ENCODE measurements at regions of chr18 and their contacts with region 1.

Region 1: DNA sequence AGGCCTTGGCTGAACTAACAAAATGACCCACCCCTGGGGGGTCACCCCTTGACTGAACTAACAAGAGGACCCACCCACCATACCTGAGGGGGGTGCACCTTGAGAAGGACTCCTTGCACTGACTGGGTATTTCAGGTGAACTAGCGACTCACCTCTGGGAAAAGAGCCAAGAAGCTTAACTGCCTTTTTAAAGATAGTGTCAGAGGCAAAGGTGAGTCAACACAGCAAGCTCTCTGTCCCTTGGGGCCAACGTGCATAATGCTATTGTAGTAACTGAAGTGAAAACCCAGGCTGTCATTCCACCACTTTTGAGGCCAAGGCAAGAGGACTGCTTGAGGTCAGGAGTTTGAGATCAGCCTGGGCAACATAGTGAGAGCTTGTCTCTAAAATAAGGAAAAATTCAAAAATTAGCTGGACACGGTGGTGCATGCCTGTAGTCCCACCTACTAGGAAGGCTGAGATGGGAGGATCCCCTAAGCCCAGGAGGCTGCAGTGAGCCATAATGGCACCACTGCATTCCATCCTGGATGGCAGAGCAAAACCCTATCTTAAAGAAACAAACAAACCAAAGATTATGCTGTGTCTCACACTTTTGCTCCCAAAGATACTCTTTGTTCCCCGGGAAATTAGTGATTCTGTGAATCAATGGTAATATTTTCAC is 36.4 kb upstream of the ZCCHC2 start:
- DNase-seq: no peak
- ATAC-seq: no peak
- H3K4me3 ChIP-seq: no peak overlapping the region
- H3K4me3 Mint-ChIP-seq: no peak overlapping the region
- H3K27ac ChIP-seq: no peak overlapping the region
- H3K27ac Mint-ChIP-seq: no peak overlapping the region
- H3K4me1 ChIP-seq: no peaks in the 10 kb centered on the region
- H3K4me1 Mint-ChIP-seq: no peaks in the 10 kb centered on the region
- H3K27me3 ChIP-seq: peaks cover 0 to 3% of the 10 kb centered on the region in 2 experiments
- H3K27me3 Mint-ChIP-seq: peaks cover 33% of the 10 kb centered on the region
- CTCF ChIP-seq: no peak

Region 2: DNA sequence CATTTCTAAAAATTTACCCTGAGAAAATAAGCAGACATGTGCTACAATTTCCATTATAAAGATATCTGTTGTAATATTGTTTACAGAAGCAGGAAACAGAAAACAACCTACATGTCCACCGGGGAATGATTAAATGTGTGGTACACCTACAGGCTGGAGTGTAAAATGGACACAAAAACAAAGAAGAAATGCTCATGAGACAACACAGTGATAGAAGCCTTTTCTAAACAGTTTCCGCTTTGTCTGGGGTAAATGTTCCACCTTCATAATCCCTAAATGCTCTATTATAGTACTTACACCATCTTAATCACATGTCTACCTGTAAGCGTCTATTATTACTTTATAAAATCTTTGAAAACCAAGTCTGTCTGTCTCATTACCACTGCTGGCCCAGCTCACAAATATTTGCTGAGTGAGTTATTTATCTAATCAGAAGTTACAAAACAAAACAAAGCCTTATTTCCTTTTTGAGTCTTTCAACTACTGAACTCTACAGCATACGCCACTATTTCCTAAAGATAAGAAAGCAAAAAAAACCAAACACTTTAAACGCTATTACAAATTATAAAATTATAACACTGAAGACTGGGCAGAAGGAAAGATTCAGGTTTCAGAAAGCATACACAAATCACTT is 394.8 kb before region 1 on chr18:
- CTCF ChIA-PET with region 1: no interaction called
- POLR2A ChIA-PET with region 1: no interaction called
- intact Hi-C with region 1: no loop called
- DNase-seq: no peak
- ATAC-seq: no peak
- H3K4me3 ChIP-seq: no peak overlapping the region
- H3K4me3 Mint-ChIP-seq: no peak overlapping the region
- H3K27ac ChIP-seq: no peak overlapping the region
- H3K27ac Mint-ChIP-seq: no peak overlapping the region
- H3K4me1 ChIP-seq: peaks cover 17% of the 10 kb centered on the region
- H3K4me1 Mint-ChIP-seq: peaks cover 27% of the 10 kb centered on the region
- H3K27me3 ChIP-seq: no peaks in the 10 kb centered on the region
- H3K27me3 Mint-ChIP-seq: no peaks in the 10 kb centered on the region
- CTCF ChIP-seq: no peak

Region 3: DNA sequence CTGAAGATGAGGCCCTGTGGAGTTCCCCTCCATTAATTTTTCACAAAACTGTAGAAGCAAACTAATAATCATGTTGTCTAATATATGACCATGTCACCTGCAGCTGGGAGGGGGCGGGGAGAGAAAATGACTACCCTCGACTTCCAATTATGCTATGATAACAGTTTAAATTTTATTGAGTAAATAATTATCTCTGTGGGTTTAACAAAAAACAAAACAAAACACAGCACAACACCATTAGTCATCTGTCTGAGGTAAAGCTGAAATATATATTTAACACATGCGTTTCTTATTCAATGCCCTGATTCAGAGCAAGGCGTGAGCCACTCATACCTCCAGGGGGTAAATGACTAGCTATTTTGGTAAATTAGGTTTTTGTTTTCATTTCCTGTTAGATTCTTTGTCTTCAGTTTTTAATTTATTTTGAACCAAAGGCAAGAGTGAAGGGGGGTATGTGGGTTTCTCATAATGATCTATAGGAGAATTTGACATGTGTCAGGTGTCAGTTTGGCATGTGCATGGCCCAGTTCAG is 41.0 kb before region 1 on chr18:
- CTCF ChIA-PET with region 1: no interaction called
- POLR2A ChIA-PET with region 1: interaction called, 4 read pairs
- intact Hi-C with region 1: loop called in 1 of 2 experiments (anchors 1 kb)
- DNase-seq: no peak
- ATAC-seq: no peak
- H3K4me3 ChIP-seq: no peak overlapping the region
- H3K4me3 Mint-ChIP-seq: no peak overlapping the region
- H3K27ac ChIP-seq: no peak overlapping the region
- H3K27ac Mint-ChIP-seq: no peak overlapping the region
- H3K4me1 ChIP-seq: no peaks in the 10 kb centered on the region
- H3K4me1 Mint-ChIP-seq: no peaks in the 10 kb centered on the region
- H3K27me3 ChIP-seq: no peaks in the 10 kb centered on the region
- H3K27me3 Mint-ChIP-seq: peaks cover 3% of the 10 kb centered on the region
- CTCF ChIP-seq: no peak

Measured in CD8-positive, alpha-beta T cell (primary cell).